Caco-2 (cell line): ENCODE measurements at regions of chr12 and their contacts with region 1.

Region 1: GRCh38 chr12:80321649-80322048 is 122.4 kb upstream of the PTPRQ start:
- DNase-seq: peak; percentile 44 to 71
- H3K4me3 ChIP-seq: no peak overlapping the region
- H3K4me3 Mint-ChIP-seq: peak overlapping the region; percentile 36
- H3K27ac Mint-ChIP-seq: peak overlapping the region; percentile 84
- H3K4me1 ChIP-seq: peaks cover 17% of the 10 kb centered on the region
- H3K4me1 Mint-ChIP-seq: peaks cover 16% of the 10 kb centered on the region
- H3K27me3 ChIP-seq: no peaks in the 10 kb centered on the region
- H3K27me3 Mint-ChIP-seq: no peaks in the 10 kb centered on the region
- CTCF ChIP-seq: no peak

Region 2: DNA sequence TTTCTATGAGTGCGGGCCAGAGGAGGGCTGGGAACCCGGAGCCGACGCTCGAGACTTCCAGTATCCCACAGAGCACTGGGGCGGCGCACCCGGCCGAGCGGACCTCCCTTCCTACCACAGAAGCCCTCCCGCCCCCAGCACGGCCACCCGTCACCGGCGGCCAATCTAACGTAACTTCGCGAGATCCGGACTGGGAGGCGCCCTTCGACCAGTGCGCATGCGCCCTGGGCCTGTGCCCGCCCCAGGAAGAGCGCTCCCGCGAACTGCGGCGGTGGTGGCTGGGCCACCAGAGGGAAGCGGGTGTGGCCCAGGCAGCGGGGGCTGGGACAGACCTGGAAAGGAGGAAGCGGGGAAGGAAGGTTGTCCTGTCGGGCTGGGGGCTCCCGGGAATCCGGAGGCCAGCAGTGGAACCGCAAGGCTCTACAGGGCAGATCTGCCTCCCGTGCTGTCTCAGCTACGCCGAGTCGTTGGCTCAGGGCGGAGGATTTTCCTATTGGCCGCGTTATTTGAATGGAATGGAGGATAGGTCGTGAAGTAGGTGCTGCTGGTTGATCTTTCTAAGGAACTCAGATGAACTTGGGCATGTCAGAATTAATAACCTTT is 386.5 kb before region 1 on chr12 and contains the start of gene PPP1R12A:
- CTCF ChIA-PET with region 1: no interaction called
- POLR2A ChIA-PET with region 1: no interaction called
- intact Hi-C with region 1: no loop called
- DNase-seq: peak; percentile 97
- H3K4me3 ChIP-seq: peak within 1 kb of the TSS; percentile 100
- H3K4me3 Mint-ChIP-seq: peak within 1 kb of the TSS; percentile 83
- H3K27ac Mint-ChIP-seq: peak within 1 kb of the TSS; percentile 71
- H3K4me1 ChIP-seq: peaks cover 10% of the 10 kb centered on the region; the same call in 1 of the 2 replicates
- H3K4me1 Mint-ChIP-seq: peaks cover 5% of the 10 kb centered on the region
- H3K27me3 ChIP-seq: no peaks in the 10 kb centered on the region
- H3K27me3 Mint-ChIP-seq: no peaks in the 10 kb centered on the region
- CTCF ChIP-seq: no peak
- total RNA-seq, gene PPP1R12A: 60.7 and 62.5 TPM in 2 replicates

Region 3: DNA sequence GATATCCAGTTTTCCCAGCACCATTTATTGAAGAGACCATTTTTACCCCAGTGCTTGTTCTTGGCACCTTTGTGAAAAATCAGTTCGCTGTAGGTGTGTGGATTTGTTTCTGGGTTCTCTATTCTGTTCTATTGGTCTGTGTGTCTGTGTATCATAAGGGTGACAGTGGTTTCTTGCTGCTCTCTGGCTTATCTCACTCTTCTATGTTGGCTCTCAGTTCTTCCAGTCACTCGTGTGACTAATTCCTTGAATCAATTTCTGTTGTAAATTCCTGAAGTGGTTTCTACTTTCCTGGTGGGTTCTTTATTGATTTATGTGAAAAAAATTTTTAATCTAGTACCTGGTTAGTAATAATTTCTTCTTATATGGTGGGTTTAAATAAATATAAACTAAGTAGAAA is 164.0 kb before region 1 on chr12:
- CTCF ChIA-PET with region 1: no interaction called
- POLR2A ChIA-PET with region 1: no interaction called
- intact Hi-C with region 1: no loop called
- DNase-seq: no peak
- H3K4me3 ChIP-seq: no peak overlapping the region
- H3K4me3 Mint-ChIP-seq: no peak overlapping the region
- H3K27ac Mint-ChIP-seq: no peak overlapping the region
- H3K4me1 ChIP-seq: no peaks in the 10 kb centered on the region
- H3K4me1 Mint-ChIP-seq: no peaks in the 10 kb centered on the region
- H3K27me3 ChIP-seq: no peaks in the 10 kb centered on the region
- H3K27me3 Mint-ChIP-seq: peaks cover 5% of the 10 kb centered on the region
- CTCF ChIP-seq: no peak

Region 4: GRCh38 chr12:80353257-80353656 is 31.6 kb after region 1 on chr12:
- CTCF ChIA-PET with region 1: no interaction called
- POLR2A ChIA-PET with region 1: no interaction called
- intact Hi-C with region 1: loop called (anchors 1 kb)
- DNase-seq: peak; percentile 42 to 51
- H3K4me3 ChIP-seq: no peak overlapping the region
- H3K4me3 Mint-ChIP-seq: no peak overlapping the region
- H3K27ac Mint-ChIP-seq: peak overlapping the region; percentile 21
- H3K4me1 ChIP-seq: 0 out of 2 replicates have a peak, but pooled peaks cover 5% of the 10 kb centered on the region
- H3K4me1 Mint-ChIP-seq: peaks cover 7% of the 10 kb centered on the region
- H3K27me3 ChIP-seq: no peaks in the 10 kb centered on the region
- H3K27me3 Mint-ChIP-seq: peaks cover 4% of the 10 kb centered on the region
- CTCF ChIP-seq: no peak